Activated naive CD8-positive, alpha-beta T cell treated with anti-CD3 and anti-CD28 coated beads, Interleukin-2, amount 10 ng/mL, durations not matched to agents 7 days and 5 days (primary cell): ENCODE measurements at regions of chr19 and their contacts with region 1.

Region 1: GRCh38 chr19:29665215-29665825 is at the start of gene PLEKHF1:
- DNase-seq: peak; percentile 98
- ATAC-seq: peak; percentile 81
- H3K4me3 Mint-ChIP-seq: peak within 1 kb of the TSS; percentile 89
- H3K27ac Mint-ChIP-seq: peak within 1 kb of the TSS; percentile 88
- H3K4me1 Mint-ChIP-seq: peaks cover 61% of the 10 kb centered on the region
- H3K27me3 Mint-ChIP-seq: no peaks in the 10 kb centered on the region
- total RNA-seq, gene PLEKHF1: 33.3 to 35.9 TPM

Region 2: DNA sequence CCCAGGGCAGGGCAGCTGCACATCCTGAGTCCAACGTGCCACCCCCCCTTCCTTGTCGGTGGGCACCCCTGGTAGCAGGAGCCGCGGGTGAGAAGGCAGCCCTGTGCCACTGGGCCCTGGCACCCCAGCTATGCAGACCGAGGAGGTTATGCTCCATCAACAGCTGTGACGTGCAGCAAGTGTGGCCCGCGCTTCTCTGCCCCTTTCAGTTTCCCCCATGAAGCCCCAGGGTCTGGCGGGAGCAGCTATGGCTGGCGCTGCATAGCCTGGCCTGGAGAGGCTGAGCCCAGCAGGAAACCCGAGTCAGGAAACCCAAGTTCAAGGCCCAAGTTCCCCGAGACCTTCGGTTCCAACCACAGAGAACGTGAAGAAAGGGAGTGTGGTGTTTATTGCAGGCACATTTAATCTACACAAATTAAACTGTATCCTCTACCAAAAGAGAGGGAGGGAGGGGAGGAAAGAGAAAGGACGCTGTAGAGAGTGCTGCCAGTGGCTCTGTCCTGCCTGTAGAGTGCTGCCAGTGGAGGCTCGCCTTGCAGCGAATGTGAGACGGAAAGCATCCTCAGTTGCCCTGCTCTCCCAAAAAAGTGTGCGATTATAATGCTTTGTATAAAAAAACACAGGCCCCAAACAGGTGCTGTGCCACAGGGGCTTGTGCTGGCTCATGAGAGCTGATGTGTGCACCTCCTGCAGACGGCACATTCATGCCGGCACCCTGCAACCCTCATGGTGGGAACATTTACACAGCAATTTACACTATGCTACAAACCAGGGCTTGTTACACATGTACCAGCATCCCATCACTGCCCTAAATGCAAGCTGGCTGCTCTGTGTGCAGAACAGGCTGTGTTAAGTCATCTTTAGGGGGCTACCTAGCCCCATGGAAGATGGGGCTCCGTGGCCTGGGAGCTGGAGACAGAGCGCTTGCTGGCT is 42.9 kb before region 1 on chr19:
- POLR2A ChIA-PET with region 1: interaction called, 40 read pairs
- DNase-seq: peak; percentile 57
- ATAC-seq: peak; percentile 81
- H3K4me3 Mint-ChIP-seq: peak overlapping the region; percentile 75
- H3K27ac Mint-ChIP-seq: peak overlapping the region; percentile 82
- H3K4me1 Mint-ChIP-seq: peaks cover 43% of the 10 kb centered on the region
- H3K27me3 Mint-ChIP-seq: no peaks in the 10 kb centered on the region

Region 3: DNA sequence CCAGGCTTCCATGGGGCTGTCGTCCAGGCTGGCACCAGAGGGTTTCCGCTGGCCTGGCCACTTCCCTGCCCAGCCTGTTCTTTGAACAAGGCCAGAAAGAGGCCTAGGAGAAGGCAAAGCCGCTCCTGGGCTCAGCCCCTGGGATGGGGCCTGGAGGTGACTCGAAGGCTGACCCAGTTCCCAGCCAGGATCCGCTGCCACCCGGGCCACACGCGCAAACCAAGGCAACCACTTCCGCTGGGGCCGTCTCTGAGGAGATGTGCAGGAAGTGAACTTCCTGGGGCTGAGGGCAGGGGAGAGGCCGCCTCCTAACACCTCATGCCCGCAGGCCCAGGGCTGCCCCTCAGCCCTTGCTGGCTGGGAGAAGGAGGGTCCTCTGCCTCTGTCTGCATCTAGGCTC is 15.1 kb after region 1 on chr19:
- POLR2A ChIA-PET with region 1: interaction called, 67 read pairs
- DNase-seq: peak; percentile 88
- ATAC-seq: peak; percentile 91
- H3K4me3 Mint-ChIP-seq: peak overlapping the region; percentile 54
- H3K27ac Mint-ChIP-seq: peak overlapping the region; percentile 84
- H3K4me1 Mint-ChIP-seq: peaks cover 36% of the 10 kb centered on the region
- H3K27me3 Mint-ChIP-seq: no peaks in the 10 kb centered on the region

Region 4: DNA sequence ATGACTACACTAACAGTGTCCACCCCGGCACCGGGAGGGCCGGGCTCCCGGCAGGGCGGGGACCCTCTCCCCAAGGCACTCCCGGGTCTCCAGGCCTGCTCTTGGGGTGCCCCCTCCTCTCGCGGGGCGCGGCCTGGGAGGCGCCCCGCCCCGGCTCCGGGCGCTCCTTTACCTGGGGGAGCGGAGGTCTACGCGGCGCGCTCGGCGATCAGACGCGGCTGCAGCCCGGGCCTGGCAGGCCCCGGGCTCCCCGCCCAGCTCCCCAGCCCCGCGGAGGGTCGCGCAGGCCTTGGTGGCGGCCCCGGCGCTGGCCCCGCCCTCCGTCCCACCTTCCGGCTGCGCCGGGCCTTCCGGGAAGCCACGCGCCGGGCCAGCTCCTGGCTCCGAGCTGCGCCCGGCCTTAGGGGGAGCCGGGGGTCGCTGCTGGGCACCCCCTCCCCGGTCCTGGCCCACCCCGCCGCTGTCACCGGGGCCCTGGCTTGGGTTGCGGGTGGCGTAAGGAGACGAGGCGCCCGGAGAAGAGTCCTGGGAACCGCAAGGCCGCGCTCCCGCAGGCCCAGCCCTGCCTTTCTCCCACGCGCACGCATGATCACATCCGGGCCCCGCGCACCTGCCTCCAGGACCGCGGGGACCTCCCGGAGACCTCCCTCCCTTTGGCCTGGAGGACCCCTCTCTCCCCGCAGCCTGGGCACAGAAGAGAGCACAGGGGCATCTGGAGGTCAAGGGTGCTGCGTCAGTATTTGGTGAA is 49.8 kb after region 1 on chr19 and contains the start of gene C19orf12:
- POLR2A ChIA-PET with region 1: interaction called, 58 read pairs
- DNase-seq: peak; percentile 86
- ATAC-seq: peak; percentile 69
- H3K4me3 Mint-ChIP-seq: peak within 1 kb of the TSS; percentile 93
- H3K27ac Mint-ChIP-seq: peak within 1 kb of the TSS; percentile 98
- H3K4me1 Mint-ChIP-seq: peaks cover 47% of the 10 kb centered on the region
- H3K27me3 Mint-ChIP-seq: peaks cover under 1% of the 10 kb centered on the region
- total RNA-seq, gene C19orf12: 31.8 to 38.2 TPM

Region 5: DNA sequence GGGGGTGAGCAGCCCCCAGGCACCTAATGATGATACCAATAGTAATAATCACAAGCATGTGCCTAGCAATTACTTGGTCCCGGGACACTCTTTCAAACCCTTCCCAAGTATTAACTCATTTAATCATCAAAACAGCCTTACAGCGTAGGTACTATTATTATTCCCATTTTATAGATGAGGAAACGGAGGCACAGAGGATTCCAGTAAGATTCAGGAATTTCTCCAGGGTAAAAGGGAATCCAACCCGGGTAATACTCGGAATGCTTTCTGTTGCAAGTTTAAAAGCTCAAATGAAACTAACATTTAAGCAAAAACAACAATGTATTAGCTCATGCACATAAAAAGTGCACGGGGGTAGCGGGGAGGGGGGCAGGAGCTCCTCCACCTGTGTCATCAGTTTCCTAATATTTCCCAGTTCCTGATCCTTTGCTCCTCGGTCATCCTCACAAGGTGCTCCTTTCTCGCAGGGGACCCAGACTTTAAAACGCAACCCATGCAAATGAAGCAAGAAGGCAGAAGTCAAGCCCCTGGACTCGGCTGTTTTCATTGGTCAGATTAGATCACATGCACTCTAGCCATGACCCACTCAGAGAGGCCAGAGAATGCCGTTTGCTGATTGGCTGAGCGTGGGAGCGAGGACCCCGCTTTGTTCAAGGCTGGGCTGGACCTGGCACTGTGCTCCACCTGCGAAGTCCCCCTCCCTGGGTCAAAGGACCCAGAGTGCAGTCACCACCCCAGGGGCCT is 88.0 kb after region 1 on chr19:
- POLR2A ChIA-PET with region 1: no interaction called
- DNase-seq: no peak
- ATAC-seq: no peak
- H3K4me3 Mint-ChIP-seq: no peak overlapping the region
- H3K27ac Mint-ChIP-seq: no peak overlapping the region
- H3K4me1 Mint-ChIP-seq: no peaks in the 10 kb centered on the region
- H3K27me3 Mint-ChIP-seq: peaks cover 4% of the 10 kb centered on the region